ENCODE measurements at regions of chr14 and their contacts with region 1.

Region 1: GRCh38 chr14:33755358-33755757 is 195.5 kb downstream of the EGLN3 start:
- DNase-seq: no peak
- H3K4me3 ChIP-seq: no peak overlapping the region
- H3K27ac ChIP-seq: no peak overlapping the region
- H3K4me1 ChIP-seq: no peaks in the 10 kb centered on the region
- H3K27me3 ChIP-seq: no peaks in the 10 kb centered on the region
- CTCF ChIP-seq: no peak
- POLR2A ChIP-seq: no peak

Region 2: GRCh38 chr14:32820181-32820580 is 935.2 kb before region 1 on chr14:
- intact Hi-C with region 1: loop called (anchors 5 kb)
- DNase-seq: no peak
- H3K4me3 ChIP-seq: no peak overlapping the region
- H3K27ac ChIP-seq: no peak overlapping the region
- H3K4me1 ChIP-seq: no peaks in the 10 kb centered on the region
- H3K27me3 ChIP-seq: no peaks in the 10 kb centered on the region
- CTCF ChIP-seq: no peak
- POLR2A ChIP-seq: no peak

Region 3: GRCh38 chr14:33016613-33017012 is 738.7 kb before region 1 on chr14:
- intact Hi-C with region 1: loop called (anchors 5 kb)
- DNase-seq: no peak
- H3K4me3 ChIP-seq: no peak overlapping the region
- H3K27ac ChIP-seq: no peak overlapping the region
- H3K4me1 ChIP-seq: no peaks in the 10 kb centered on the region
- H3K27me3 ChIP-seq: no peaks in the 10 kb centered on the region
- CTCF ChIP-seq: no peak
- POLR2A ChIP-seq: no peak

Measured in breast epithelium (tissue), 4 donors.